AG04449 (cell line): ENCODE measurements at regions of chr11 and their contacts with region 1.

Region 1: GRCh38 chr11:59135648-59136461 is 6.8 kb upstream of the FAM111A start:
- DNase-seq: no peak
- H3K4me3 ChIP-seq: peak overlapping the region; percentile 30; the same call in 1 of the 2 replicates
- CTCF ChIP-seq: peak; percentile 100

Region 2: GRCh38 chr11:59053387-59053786 is 82.5 kb before region 1 on chr11:
- CTCF ChIA-PET with region 1: interaction called, 36 read pairs
- POLR2A ChIA-PET with region 1: no interaction called
- DNase-seq: no peak
- H3K4me3 ChIP-seq: no peak overlapping the region
- CTCF ChIP-seq: peak; percentile 69

Region 3: DNA sequence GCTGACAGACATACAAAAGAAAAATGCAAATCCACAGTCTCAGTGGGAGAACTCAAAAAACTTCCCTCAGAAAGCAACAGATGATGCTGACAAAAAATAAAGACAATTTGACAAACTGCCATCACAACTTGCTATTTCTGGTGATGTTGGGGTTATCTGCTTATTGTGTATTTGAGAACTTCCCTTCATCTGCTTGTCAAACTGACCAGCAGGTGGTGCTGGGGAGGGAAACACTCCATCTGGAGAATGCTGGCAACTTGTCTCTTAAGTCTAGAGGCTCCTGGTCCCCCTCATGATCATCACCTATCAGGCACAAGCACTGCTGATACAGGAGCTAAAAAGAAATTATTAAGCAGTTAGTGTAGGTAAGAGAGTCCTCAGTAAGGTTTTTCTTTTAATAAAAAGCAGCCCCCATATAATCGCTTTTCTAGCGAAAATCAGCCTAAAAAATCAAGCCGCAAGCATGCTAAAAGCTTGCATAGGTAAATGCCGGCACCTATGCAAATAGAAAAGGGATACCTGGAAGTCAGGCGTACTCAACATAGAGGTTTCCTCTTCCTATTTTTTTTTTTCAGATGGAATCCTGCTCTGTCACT is 38.6 kb before region 1 on chr11:
- CTCF ChIA-PET with region 1: interaction called, 67 read pairs
- POLR2A ChIA-PET with region 1: no interaction called
- DNase-seq: no peak
- H3K4me3 ChIP-seq: no peak overlapping the region
- CTCF ChIP-seq: peak; percentile 68

Region 4: DNA sequence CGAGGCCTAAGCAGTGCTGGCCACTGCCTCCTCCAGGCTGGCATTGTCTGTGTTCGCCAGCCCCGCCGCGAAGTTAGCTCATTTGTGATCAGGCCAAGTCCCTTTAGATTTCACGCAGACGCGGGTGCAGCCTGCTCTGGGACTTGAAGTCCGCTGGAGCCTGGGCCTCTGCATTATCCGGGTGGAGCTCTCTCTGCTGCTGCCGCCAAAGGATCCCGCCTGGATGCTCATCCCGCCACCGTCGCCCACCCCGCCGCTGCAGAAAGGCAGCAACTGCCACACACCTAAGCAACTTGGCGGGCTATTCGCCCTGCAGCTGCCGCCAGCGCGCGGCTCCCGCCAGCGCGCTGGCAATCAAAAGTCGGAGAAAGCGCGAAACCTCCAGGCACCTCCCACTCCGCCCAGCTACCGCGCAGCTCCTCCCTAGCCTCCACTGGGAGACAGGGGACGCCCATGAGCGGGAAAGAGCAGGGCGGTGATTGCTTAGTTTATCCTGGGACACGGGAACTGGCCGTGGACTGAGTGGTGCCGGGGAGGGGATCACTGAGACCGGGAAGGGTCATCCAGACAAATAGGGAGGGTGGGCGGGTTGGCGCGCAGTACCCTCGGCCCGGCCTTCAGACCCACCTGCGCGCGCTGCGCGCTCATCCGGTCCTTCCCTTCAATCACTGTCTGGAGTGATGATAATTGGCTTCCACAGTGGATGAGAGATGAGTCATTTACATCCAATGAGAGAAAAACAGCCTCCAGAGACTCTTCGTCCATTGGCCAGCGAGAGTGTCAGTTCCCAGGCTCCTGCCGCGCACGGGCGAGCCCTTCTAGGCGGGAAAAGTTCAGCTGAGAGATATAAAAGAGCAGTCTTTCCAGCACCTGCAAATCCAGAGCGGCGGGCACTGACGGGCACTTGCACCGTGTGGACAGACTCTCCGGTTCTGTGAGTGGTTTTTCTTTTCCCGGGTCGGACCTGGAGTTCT is 29.2 kb before region 1 on chr11 and contains the start of gene FAM111B:
- CTCF ChIA-PET with region 1: interaction called, 57 read pairs
- POLR2A ChIA-PET with region 1: no interaction called
- DNase-seq: peak; percentile 47
- H3K4me3 ChIP-seq: peak within 1 kb of the TSS; percentile 68
- CTCF ChIP-seq: peak; percentile 23

Region 5: GRCh38 chr11:59114344-59114743 is 21.5 kb before region 1 on chr11:
- CTCF ChIA-PET with region 1: interaction called, 57 read pairs
- POLR2A ChIA-PET with region 1: no interaction called
- DNase-seq: no peak
- H3K4me3 ChIP-seq: no peak overlapping the region
- CTCF ChIP-seq: no peak

Region 6: GRCh38 chr11:59247531-59248227 is 111.8 kb after region 1 on chr11:
- CTCF ChIA-PET with region 1: no interaction called
- POLR2A ChIA-PET with region 1: no interaction called
- DNase-seq: no peak
- H3K4me3 ChIP-seq: no peak overlapping the region
- CTCF ChIP-seq: no peak

Region 7: DNA sequence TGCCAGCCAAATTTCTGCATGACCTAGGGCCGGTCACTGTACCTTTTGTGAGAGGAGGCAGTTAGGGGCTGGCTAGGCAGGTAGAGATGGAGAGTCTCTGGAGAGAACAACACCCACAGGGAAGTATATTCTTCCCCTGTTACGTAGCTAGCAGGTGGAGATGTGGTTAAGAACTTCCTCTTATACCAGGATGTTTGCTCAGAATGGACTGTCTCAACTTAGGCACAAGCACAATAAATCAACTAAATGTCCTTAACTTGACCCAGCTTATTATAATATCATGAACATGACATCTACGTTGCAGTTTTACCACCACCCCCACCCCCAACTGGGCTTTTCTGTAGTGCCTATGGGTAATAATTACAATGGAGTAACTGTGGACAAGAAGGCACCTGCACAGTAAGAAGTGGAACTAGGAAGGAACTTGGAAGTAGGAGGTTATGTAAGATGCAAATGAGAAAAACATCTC is 137.6 kb after region 1 on chr11:
- CTCF ChIA-PET with region 1: no interaction called
- POLR2A ChIA-PET with region 1: no interaction called
- DNase-seq: no peak
- H3K4me3 ChIP-seq: no peak overlapping the region
- CTCF ChIP-seq: no peak